Psoas muscle (tissue), 8 donors: ENCODE measurements at regions of chr14 and their contacts with region 1.

Region 1: DNA sequence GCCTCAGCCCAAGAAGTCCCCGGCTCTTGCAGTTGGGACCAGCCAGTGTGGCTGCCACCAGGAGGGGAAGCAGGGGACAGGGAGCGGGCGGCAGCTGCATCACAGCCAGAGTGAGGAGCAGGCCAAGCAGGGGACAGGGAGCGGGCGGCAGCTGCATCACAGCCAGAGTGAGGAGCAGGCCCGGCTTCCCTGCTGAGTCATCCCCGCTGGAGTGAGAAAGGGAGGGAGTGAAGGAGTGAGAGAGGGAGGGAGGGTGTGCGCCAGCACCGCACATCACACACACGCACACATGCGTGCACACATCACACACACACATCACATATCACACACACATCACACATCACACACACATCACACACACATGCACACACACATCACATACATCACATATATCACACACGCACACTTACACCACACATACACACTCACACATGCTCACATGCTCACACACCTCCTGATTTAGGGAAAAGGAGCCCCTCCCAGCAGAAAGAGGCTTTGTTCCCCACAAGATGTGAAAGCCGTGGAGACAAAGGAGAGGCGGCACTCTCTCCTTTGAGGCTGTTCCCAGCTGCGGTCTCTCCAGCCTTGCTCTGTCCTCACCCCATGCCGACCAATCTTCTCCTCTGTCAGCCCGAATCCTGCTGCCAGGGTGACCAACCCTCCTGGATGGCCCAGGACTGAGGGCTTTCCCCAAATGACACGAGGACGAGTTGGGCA is 16.7 kb upstream of the ZDHHC22 start:
- DNase-seq: peak; percentile 53 to 76
- ATAC-seq: peak; percentile 93 to 97 (median 96)
- H3K4me3 ChIP-seq: no peak overlapping the region
- H3K27ac ChIP-seq: no peak overlapping the region
- H3K4me1 ChIP-seq: no peaks in the 10 kb centered on the region
- H3K27me3 ChIP-seq: peaks cover 0 to 8% (median 5%) of the 10 kb centered on the region in 3 donors
- CTCF ChIP-seq: no peak

Region 2: GRCh38 chr14:77200406-77200985 is 42.2 kb after region 1 on chr14:
- intact Hi-C with region 1: no loop called
- DNase-seq: no peak
- ATAC-seq: no peak
- H3K4me3 ChIP-seq: no peak overlapping the region
- H3K27ac ChIP-seq: no peak overlapping the region
- H3K4me1 ChIP-seq: no peaks in the 10 kb centered on the region
- H3K27me3 ChIP-seq: peaks cover 0 to 13% (median 5%) of the 10 kb centered on the region in 3 donors
- CTCF ChIP-seq: no peak

Region 3: DNA sequence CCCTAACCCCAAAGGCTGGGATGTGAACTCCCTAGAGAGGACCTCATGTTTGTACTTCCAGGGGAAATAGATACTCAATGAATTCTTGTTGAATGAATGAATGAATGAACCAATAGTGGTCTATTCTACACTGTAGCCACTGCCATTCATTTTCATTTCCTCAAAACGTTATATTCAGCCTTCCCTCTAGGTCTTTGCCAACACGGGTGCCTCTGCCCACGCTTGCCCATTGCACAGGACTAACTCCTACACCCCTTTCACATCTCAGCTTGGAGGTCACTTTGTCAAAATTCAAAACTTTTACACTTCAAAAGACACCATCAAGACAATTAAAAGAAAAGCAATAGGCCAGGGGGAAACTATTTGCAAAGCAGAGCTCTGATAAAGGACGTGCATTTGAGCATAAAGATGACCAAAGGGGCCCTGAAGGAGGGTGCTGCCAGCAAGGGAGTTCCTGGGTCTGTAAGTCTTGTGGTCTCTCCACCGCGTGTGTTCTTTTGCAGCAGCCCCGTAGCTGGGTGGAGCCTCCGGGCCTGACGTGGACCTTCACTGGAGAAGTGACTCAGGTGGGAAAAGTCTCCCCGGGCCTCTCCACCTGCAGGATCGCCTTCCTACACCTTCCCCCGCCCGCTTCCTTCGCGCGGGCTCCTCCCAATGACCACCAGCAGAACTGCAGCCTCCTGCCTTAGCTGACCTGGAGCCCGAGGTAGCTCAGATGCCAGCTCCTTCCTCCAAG is 54.8 kb after region 1 on chr14:
- intact Hi-C with region 1: loop called in 1 of 2 experiments (anchors 5 kb)
- DNase-seq: peak in 1 of 2 donors; percentile 37
- ATAC-seq: peak in 2 of 4 donors; percentile 39
- H3K4me3 ChIP-seq: no peak overlapping the region
- H3K27ac ChIP-seq: no peak overlapping the region
- H3K4me1 ChIP-seq: no peaks in the 10 kb centered on the region
- H3K27me3 ChIP-seq: peaks cover 0 to 25% (median 5%) of the 10 kb centered on the region in 3 donors
- CTCF ChIP-seq: peak; percentile 26

Region 4: GRCh38 chr14:77290741-77291140 is 132.4 kb after region 1 on chr14:
- intact Hi-C with region 1: no loop called
- DNase-seq: no peak
- ATAC-seq: no peak
- H3K4me3 ChIP-seq: no peak overlapping the region
- H3K27ac ChIP-seq: no peak overlapping the region
- H3K4me1 ChIP-seq: no peaks in the 10 kb centered on the region
- H3K27me3 ChIP-seq: no peaks in the 10 kb centered on the region
- CTCF ChIP-seq: no peak